Heart left ventricle (tissue), 16 donors: ENCODE measurements at regions of chr1 and their contacts with region 1.

Region 1: DNA sequence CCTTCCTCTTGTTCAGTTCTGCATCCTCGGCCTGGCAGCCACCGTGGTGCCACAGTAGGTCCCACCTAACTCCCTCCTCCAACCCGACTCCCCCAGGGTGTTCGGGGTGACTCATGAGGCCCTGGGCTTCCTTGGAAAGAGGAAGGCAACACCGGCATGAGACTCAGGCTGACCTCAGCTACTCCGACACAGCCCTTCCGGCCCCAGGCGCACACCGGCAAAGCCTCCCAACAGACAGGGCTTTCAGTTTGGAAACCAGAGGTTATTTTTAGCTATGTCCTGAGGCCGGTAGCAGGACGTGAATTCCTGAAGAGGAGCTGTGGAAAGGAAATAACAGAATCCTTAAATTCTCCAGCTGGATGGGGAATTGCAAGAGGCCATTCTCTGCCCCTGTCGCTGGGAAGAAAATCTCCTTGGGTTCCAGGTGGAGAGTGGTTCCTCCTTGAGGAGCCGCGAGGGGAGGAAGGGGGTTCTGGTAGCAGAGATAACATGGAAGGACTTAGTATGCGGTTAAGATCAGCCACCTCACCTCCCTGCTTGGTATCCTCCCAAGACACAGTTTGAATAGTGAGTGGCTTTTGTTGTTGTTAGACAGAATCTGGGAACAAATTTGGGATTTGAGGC is 24.4 kb downstream of the PLXNA2 start:
- DNase-seq: peak; percentile 79 to 90 (median 84)
- ATAC-seq: peak; percentile 79 to 91 (median 84)
- H3K4me3 ChIP-seq: peak overlapping the region in 4 of 12 donors; percentile 2 to 19 (median 6)
- H3K27ac ChIP-seq: peak overlapping the region; percentile 35 to 94 (median 84)
- H3K4me1 ChIP-seq: peaks cover 15 to 93% (median 75%) of the 10 kb centered on the region in 12 donors
- H3K27me3 ChIP-seq: no peaks in the 10 kb centered on the region
- CTCF ChIP-seq: no peak
- POLR2A ChIP-seq: no peak

Region 2: GRCh38 chr1:208165659-208166058 is 54.1 kb before region 1 on chr1:
- intact Hi-C with region 1: loop called in 2 of 10 experiments (anchors 5 kb)
- DNase-seq: peak in 2 of 5 donors; percentile 39 to 55
- ATAC-seq: peak in 2 of 4 donors; percentile 8 to 19
- H3K4me3 ChIP-seq: no peak overlapping the region
- H3K27ac ChIP-seq: no peak overlapping the region
- H3K4me1 ChIP-seq: peaks cover 5 to 92% (median 64%) of the 10 kb centered on the region in 12 donors
- H3K27me3 ChIP-seq: no peaks in the 10 kb centered on the region
- CTCF ChIP-seq: no peak
- POLR2A ChIP-seq: no peak